ENCODE measurements at regions of chr5 and their contacts with region 1.

Region 1: DNA sequence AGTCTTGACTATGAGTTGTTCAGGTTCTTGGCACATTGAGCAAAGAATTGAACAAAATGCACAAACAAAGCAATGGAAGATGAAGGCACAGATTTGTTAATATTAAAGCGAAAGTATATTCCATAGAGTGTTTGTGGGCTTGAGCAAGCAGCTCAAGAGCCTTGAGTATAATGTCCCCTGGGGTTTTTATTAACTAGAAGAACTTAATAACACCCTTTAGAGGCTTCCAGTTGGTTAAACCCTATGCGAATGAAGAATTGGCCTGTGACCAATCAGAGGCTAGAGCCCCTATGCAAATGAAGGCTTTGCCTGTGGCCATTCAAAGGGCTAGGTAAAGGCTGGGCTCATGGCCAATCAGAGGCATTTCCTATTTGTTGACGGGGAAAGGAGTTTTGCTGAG is 135.3 kb upstream of the IL12B start:
- DNase-seq: no peak
- ATAC-seq: no peak

Region 2: DNA sequence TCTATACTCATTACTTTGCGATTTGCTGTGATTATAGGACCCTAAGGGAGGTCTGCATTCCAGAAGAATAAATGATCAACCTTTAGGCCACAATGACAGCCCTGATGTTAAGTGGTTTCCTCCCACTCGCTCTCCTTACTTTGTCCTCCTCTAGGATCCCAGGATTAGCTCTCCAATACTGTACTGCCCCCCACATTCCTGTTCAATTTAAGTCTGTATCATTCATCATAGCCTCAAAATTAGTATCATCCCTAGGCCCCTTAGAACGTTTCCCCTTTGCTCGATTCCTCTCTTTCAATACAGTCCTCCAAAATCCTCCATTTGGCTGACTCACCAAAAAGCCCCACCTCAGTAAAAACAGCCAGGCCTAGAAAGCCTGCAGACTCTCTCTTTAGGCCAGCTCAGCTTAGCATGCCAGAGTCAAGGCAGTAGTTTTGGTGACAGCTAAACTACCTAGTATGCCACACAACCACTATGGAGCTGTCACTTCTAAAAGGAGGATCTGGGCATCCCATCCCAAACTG is 280.7 kb before region 1 on chr5:
- intact Hi-C with region 1: no loop called
- DNase-seq: no peak
- ATAC-seq: no peak

Region 3: GRCh38 chr5:159286420-159287035 is 179.1 kb before region 1 on chr5:
- intact Hi-C with region 1: no loop called
- DNase-seq: no peak
- ATAC-seq: no peak

Region 4: GRCh38 chr5:159430361-159431012 is 35.1 kb before region 1 on chr5:
- intact Hi-C with region 1: loop called (anchors 1 kb)
- DNase-seq: no peak
- ATAC-seq: no peak

Measured in sciatic nerve (tissue), 2 donors.